ENCODE measurements at regions of chr5 and their contacts with region 1.

Region 1: GRCh38 chr5:96662725-96663513 is 743 bp downstream of the CAST start:
- DNase-seq: peak; percentile 89
- H3K4me3 Mint-ChIP-seq: peak overlapping the region; percentile 96
- H3K27ac Mint-ChIP-seq: peak overlapping the region; percentile 96
- H3K4me1 Mint-ChIP-seq: peaks cover 22% of the 10 kb centered on the region
- H3K27me3 Mint-ChIP-seq: peaks cover 3% of the 10 kb centered on the region

Region 2: DNA sequence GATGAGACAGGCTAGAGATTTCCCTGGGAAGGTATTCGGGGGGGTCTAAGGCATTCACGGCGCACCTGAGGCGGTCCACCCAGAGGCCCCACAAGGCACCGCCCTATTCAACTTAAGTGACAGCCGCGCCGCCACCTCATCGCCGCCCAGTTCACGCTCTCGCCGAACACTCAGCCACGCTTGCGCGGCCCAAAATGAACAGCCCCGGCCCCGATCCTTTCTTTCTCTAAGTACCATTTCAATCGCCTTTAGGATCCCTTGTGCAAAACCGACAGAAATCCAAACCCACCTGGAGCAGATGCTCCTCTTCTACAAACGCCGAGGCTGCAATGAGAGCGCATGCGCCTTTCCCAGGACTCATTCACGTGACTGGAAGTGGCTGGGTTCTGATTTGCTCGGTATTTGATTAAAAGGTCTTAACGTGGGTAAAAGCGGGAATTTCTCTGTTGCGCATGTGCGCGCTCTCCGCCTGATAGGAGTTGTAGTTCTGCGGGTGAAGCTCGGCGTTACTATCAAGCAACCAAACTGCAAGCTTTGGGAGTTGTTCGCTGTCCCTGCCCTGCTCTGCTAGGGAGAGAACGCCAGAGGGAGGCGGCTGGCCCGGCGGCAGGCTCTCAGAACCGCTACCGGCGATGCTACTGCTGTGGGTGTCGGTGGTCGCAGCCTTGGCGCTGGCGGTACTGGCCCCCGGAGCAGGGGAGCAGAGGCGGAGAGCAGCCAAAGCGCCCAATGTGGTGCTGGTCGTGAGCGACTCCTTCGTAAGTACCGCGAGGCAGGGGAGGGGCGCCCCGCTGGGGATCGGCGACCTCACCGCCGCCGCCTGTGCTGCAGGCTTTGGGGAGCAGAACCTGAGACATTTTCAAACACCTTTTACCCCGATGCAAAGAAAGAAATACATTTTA is 1108.0 kb before region 1 on chr5 and contains the starts of genes ARSK and SKIC3:
- CTCF ChIA-PET with region 1: no interaction called
- intact Hi-C with region 1: loop called (anchors 2 kb)
- DNase-seq: peak; percentile 92
- H3K4me3 Mint-ChIP-seq: peak within 1 kb of the TSS; percentile 87
- H3K27ac Mint-ChIP-seq: peak within 1 kb of the TSS; percentile 93
- H3K4me1 Mint-ChIP-seq: peaks cover 45% of the 10 kb centered on the region
- H3K27me3 Mint-ChIP-seq: no peaks in the 10 kb centered on the region
- total RNA-seq, gene ARSK: 4.5 to 5.1 TPM
- total RNA-seq, gene SKIC3: 67.4 to 69.5 TPM

Region 3: GRCh38 chr5:95822542-95823181 is 840.3 kb before region 1 on chr5 and contains the start of gene GLRX:
- CTCF ChIA-PET with region 1: no interaction called
- intact Hi-C with region 1: loop called (anchors 5 kb)
- DNase-seq: peak; percentile 64
- H3K4me3 Mint-ChIP-seq: peak within 1 kb of the TSS; percentile 96
- H3K27ac Mint-ChIP-seq: peak within 1 kb of the TSS; percentile 98
- H3K4me1 Mint-ChIP-seq: peaks cover 61% of the 10 kb centered on the region
- H3K27me3 Mint-ChIP-seq: no peaks in the 10 kb centered on the region
- total RNA-seq, gene GLRX: 50.4 to 51.1 TPM

Region 4: GRCh38 chr5:96079075-96079474 is 583.8 kb before region 1 on chr5:
- CTCF ChIA-PET with region 1: no interaction called
- intact Hi-C with region 1: loop called (anchors 5 kb)
- DNase-seq: peak; percentile 71
- H3K4me3 Mint-ChIP-seq: no peak overlapping the region
- H3K27ac Mint-ChIP-seq: peak overlapping the region; percentile 77
- H3K4me1 Mint-ChIP-seq: peaks cover 38% of the 10 kb centered on the region
- H3K27me3 Mint-ChIP-seq: peaks cover 9% of the 10 kb centered on the region

Region 5: DNA sequence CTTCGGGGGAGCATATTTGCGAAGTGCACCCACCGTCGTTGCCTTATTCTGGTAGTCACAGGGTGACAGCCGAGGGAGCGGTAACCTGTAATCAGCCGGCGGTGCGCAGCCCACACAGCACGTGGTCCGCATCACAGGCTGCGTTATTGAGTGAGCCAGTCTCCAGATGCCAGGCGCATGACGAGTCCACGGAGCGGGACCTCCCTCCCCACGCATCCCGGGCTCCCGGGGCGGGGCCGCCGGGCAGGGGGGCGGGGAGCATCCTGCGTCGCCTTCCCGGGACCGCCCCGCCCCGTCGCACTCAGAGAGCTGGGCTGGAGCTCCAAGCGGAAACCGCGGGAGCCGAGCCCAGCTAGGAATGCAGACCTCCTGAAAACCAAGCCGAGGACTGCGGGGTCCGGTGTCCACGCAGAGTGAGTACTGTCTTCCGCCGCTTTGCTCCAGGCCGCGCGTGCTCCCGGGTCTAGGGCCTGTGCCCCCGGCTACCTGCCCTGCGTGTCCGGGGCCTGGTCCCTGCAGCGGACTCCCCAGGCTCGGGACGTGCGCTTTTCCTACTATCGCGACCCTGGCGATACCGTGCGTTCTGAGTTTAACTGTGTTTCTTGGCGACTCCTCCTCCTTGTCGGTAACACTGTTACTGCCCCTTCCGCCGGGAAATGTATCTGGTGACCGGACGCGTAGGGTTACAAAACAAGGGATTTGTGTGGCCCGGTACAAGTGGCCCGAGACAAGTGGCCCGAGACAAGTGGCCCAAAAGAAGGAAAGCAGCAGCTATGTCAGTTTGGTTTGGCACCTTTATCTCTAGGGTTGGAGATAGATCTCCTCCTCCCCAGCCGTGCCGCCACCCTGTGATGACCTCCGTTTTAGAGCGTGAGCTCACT is 39.8 kb after region 1 on chr5:
- CTCF ChIA-PET with region 1: no interaction called
- intact Hi-C with region 1: loop called (anchors 1 kb)
- DNase-seq: peak; percentile 89
- H3K4me3 Mint-ChIP-seq: peak overlapping the region; percentile 87
- H3K27ac Mint-ChIP-seq: peak overlapping the region; percentile 88
- H3K4me1 Mint-ChIP-seq: peaks cover 47% of the 10 kb centered on the region
- H3K27me3 Mint-ChIP-seq: no peaks in the 10 kb centered on the region

Region 6: GRCh38 chr5:96734871-96735325 is 72.0 kb after region 1 on chr5:
- CTCF ChIA-PET with region 1: no interaction called
- intact Hi-C with region 1: no loop called
- DNase-seq: no peak
- H3K4me3 Mint-ChIP-seq: no peak overlapping the region
- H3K27ac Mint-ChIP-seq: no peak overlapping the region
- H3K4me1 Mint-ChIP-seq: peaks cover 7% of the 10 kb centered on the region
- H3K27me3 Mint-ChIP-seq: no peaks in the 10 kb centered on the region

Region 7: DNA sequence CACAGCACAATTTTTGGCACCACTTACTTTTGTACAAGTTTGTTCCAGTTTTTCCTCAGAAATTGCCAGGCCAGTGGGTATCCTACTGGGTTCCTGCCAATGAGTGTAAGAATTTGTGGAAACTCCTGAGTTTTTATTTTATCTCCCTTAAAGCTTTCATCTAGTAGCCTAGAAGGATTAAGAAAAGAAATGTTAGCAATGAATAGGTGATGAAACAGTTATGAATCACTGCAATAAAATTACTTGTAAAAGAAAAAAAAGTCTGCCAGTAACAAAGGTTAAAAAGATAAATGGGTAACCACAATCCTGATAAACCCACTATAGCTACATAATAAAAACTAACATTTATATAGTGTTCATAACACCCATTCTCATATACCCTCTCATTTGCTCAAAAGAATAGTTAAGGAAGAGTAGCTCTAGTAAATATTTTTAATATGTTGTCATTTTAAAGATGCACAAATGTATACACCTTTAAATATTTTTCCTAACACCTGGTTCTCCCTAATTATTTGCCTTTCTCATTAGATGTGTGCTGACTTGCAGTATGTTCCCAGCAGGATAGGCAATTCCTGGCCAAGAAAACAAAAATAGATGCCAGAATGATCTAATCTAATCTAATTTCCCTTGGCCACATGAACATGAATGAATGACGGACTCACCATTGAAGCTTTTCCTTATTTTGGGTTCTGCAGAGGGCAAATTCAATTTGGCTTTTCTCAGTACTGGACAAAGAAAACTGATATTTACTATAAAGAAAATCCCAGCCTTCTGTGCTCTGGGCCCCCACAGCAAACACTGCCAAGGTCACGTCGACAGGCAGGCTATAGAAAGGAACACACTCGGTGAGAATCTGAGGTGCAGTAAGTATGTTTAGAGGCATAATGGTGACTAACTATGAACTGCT is 118.4 kb after region 1 on chr5:
- CTCF ChIA-PET with region 1: no interaction called
- intact Hi-C with region 1: no loop called
- DNase-seq: no peak
- H3K4me3 Mint-ChIP-seq: no peak overlapping the region
- H3K27ac Mint-ChIP-seq: peak overlapping the region; percentile 57
- H3K4me1 Mint-ChIP-seq: peaks cover 4% of the 10 kb centered on the region
- H3K27me3 Mint-ChIP-seq: no peaks in the 10 kb centered on the region

Region 8: DNA sequence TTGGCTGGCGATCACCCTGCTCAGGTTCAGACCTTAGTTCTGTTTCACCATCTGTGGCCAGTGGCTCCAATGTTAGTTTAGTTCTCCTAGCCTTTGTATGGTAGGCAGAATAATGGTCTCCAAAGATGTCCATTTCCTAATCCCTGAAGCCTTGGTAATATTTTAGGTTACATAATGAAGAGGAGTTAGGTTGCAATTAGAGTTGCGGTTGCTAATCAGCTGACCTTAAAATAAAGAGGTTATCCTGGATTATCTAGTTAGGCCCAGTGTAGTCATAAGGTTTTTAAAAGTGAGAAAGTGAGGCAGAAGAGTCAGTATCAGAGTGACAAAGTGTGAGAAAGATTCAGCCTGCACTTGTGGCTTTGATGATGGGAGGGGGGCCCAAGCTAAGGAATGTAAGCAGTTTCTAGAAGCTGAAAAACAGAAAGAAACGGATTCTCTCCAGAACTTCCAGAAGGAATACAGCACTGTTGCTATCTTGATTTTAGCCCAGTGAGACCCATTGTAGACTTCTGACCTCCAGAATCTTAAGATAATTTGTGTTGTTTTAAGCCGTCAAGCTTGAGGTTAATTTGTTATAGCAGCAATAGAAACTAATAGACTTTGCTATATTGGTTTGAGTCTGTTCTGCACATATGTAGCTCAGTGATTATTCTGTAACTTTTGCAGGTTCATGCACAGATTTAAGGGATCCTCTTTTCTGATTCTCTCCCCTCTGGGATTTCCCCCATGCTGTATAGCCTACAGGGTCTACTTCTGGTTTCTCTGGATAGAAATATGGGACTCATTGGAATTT is 294.5 kb after region 1 on chr5:
- CTCF ChIA-PET with region 1: no interaction called
- intact Hi-C with region 1: loop called (anchors 5 kb)
- DNase-seq: peak; percentile 73
- H3K4me3 Mint-ChIP-seq: peak overlapping the region; percentile 64
- H3K27ac Mint-ChIP-seq: peak overlapping the region; percentile 86
- H3K4me1 Mint-ChIP-seq: peaks cover 77% of the 10 kb centered on the region
- H3K27me3 Mint-ChIP-seq: no peaks in the 10 kb centered on the region

Region 9: DNA sequence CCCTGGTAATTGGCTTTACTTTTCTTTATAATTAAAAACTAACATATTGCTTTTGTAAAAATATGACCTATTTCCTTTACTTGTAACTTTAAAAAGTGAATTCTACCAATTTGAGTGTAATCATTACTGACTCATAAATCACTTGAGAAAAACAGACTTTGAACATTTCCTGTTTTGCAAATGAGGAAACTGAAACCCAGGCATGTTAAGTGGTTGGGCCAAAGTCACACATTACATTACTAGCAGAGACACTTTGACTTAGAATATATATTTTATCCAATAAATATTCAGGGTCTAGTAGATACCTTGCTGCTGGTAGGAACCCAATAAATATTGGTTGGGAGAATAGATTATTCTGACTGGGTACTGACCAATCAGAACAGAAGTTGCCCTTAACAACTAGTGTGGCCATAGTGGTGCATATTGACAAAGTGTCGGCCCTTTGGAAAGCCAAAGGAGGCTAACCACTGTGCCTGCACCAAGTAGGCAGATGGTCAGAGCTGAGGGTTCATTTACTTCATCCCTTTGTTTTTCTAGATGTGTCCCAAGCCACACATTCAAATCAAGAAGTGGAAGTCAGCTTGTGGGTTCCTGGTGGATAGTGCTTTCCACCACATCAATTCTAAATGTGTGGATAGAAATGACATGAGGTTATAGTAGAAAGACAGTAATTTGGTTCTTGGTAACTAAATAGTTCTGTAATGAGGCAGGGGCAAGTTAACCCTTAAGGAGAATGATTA is 885.2 kb after region 1 on chr5:
- CTCF ChIA-PET with region 1: no interaction called
- intact Hi-C with region 1: loop called (anchors 5 kb)
- DNase-seq: peak; percentile 11
- H3K4me3 Mint-ChIP-seq: no peak overlapping the region
- H3K27ac Mint-ChIP-seq: peak overlapping the region; percentile 6
- H3K4me1 Mint-ChIP-seq: peaks cover 18% of the 10 kb centered on the region
- H3K27me3 Mint-ChIP-seq: peaks cover 3% of the 10 kb centered on the region

Measured in activated naive CD4-positive, alpha-beta T cell treated with anti-CD3 and anti-CD28 coated beads for 36 hours (primary cell).